ENCODE measurements at regions of chr1 and their contacts with region 1.

Region 1: DNA sequence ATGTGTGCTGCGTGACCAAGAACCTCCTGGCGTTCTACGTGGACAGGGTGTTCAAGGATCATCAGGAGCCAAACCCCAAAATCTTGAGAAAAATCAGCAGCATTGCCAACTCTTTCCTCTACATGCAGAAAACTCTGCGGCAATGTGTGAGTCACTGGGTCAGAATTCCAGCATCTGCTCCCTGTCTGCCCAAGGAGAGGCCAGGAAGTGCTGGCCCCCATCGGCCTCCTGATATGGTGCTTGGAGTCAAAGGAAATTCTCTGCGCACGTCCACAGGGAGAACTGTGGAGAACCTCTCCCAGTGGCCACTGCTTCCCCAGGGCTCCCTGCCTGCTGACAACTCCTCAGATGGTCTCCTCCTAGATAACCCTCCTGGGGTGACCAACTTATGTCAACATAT is 25.6 kb upstream of the IL20 start:
- DNase-seq: no peak
- ATAC-seq: no peak
- H3K4me3 ChIP-seq: no peak overlapping the region
- H3K4me3 Mint-ChIP-seq: no peak overlapping the region
- H3K27ac ChIP-seq: no peak overlapping the region
- H3K27ac Mint-ChIP-seq: no peak overlapping the region
- H3K4me1 ChIP-seq: no peaks in the 10 kb centered on the region
- H3K4me1 Mint-ChIP-seq: no peaks in the 10 kb centered on the region
- H3K27me3 ChIP-seq: no peaks in the 10 kb centered on the region
- H3K27me3 Mint-ChIP-seq: no peaks in the 10 kb centered on the region
- CTCF ChIP-seq: no peak

Region 2: GRCh38 chr1:205335643-205336091 is 1504.2 kb before region 1 on chr1:
- CTCF ChIA-PET with region 1: no interaction called
- POLR2A ChIA-PET with region 1: no interaction called
- intact Hi-C with region 1: no loop called
- DNase-seq: peak; percentile 52 to 86 (median 80)
- ATAC-seq: peak; percentile 99
- H3K4me3 ChIP-seq: no peak overlapping the region
- H3K4me3 Mint-ChIP-seq: no peak overlapping the region
- H3K27ac ChIP-seq: no peak overlapping the region
- H3K27ac Mint-ChIP-seq: no peak overlapping the region
- H3K4me1 ChIP-seq: no peaks in the 10 kb centered on the region
- H3K4me1 Mint-ChIP-seq: no peaks in the 10 kb centered on the region
- H3K27me3 ChIP-seq: no peaks in the 10 kb centered on the region
- H3K27me3 Mint-ChIP-seq: no peaks in the 10 kb centered on the region
- CTCF ChIP-seq: peak; percentile 85

Region 3: GRCh38 chr1:206537141-206537540 is 302.7 kb before region 1 on chr1:
- CTCF ChIA-PET with region 1: no interaction called
- POLR2A ChIA-PET with region 1: no interaction called
- intact Hi-C with region 1: loop called in 1 of 2 experiments (anchors 10 kb)
- DNase-seq: no peak
- ATAC-seq: no peak
- H3K4me3 ChIP-seq: no peak overlapping the region
- H3K4me3 Mint-ChIP-seq: no peak overlapping the region
- H3K27ac ChIP-seq: no peak overlapping the region
- H3K27ac Mint-ChIP-seq: no peak overlapping the region
- H3K4me1 ChIP-seq: no peaks in the 10 kb centered on the region
- H3K4me1 Mint-ChIP-seq: no peaks in the 10 kb centered on the region
- H3K27me3 ChIP-seq: no peaks in the 10 kb centered on the region
- H3K27me3 Mint-ChIP-seq: no peaks in the 10 kb centered on the region
- CTCF ChIP-seq: no peak

Region 4: DNA sequence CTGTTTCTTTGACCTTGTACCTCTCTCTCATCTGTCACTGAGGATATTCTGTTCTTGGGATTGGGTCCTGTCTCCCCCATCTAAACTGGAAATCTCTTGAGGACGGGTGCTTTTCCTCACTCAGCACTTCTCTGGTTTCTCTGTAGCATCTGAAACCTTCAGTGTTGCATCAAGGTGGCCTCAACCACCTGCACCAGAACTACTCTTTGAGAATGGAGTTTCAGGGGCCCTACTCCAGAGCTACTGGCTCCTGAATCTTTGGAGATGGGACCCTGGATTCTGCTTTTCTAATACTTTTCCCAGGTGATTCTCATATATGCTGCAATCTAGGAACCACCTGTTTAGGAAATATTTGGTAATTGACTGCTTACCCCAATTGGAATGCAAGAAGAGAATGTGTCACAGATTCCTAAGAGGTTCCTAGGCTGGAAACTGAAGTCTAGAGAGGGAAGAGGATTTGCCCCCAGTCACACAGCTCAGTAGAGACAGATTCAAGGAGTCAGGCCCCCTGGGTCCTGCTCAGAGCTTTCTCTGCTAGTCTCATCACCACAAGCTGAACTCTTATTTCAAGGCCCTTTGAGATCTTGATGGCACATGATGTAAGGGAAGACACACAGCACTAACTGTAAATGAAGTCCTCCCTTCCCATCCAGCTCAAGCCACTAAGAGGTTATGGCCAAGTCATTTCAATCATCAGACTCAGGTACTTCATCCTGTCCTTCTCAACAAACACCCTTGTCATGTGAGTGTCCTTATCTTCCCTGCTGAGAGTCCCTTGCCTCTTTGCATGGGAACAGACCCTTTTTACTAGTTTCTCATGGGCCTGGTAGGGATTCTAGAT is 276.3 kb before region 1 on chr1:
- CTCF ChIA-PET with region 1: no interaction called
- POLR2A ChIA-PET with region 1: no interaction called
- intact Hi-C with region 1: no loop called
- DNase-seq: no peak
- ATAC-seq: peak; percentile 8
- H3K4me3 ChIP-seq: peak overlapping the region; percentile 0 to 40
- H3K4me3 Mint-ChIP-seq: peak overlapping the region; percentile 83
- H3K27ac ChIP-seq: peak overlapping the region; percentile 17 to 56
- H3K27ac Mint-ChIP-seq: peak overlapping the region; percentile 95
- H3K4me1 ChIP-seq: peaks cover 90% of the 10 kb centered on the region
- H3K4me1 Mint-ChIP-seq: peaks cover 95% of the 10 kb centered on the region
- H3K27me3 ChIP-seq: no peaks in the 10 kb centered on the region
- H3K27me3 Mint-ChIP-seq: no peaks in the 10 kb centered on the region
- CTCF ChIP-seq: no peak

Measured in CD8-positive, alpha-beta T cell (primary cell).